Calu3 (cell line): ENCODE measurements at regions of chr2 and their contacts with region 1.

Region 1: DNA sequence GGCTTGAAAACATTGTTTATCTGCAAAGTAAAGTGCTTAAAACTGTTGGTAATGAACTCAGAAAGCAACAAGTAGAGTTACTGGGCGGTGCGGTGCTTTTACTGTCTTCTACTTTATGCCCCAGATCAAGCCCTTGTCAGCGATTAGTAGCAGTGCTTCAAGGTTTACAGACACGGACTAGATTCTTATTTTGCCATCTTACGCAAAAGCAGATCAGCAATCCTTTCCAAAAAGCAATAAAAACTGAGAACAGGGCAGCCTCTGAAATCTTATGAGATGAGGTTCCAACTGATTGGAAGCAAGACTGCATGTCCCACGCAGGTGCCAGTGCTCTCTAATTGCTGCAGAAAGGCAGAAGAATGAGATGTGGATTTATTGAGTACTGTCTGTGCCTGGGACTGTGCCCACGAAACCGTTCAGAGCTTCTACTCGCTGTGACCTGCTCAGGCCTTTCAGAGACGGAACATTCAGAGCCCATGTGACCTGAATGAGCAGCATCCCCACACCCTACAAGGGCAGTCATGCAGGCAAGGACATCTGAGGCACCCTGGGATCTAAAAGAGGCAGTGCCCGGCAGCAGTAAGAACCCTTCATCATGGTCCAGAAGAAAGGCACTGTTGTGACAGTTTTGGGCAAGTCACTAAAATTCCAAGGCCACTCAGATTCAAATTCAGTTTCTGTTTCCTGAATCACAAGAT is 15.7 kb downstream of the COL4A3 start:
- DNase-seq: peak; percentile 22
- H3K4me3 Mint-ChIP-seq: peak overlapping the region; percentile 41
- H3K27ac Mint-ChIP-seq: peak overlapping the region; percentile 82
- H3K4me1 Mint-ChIP-seq: peaks cover 62% of the 10 kb centered on the region
- H3K27me3 Mint-ChIP-seq: no peaks in the 10 kb centered on the region
- CTCF ChIP-seq: no peak

Region 2: DNA sequence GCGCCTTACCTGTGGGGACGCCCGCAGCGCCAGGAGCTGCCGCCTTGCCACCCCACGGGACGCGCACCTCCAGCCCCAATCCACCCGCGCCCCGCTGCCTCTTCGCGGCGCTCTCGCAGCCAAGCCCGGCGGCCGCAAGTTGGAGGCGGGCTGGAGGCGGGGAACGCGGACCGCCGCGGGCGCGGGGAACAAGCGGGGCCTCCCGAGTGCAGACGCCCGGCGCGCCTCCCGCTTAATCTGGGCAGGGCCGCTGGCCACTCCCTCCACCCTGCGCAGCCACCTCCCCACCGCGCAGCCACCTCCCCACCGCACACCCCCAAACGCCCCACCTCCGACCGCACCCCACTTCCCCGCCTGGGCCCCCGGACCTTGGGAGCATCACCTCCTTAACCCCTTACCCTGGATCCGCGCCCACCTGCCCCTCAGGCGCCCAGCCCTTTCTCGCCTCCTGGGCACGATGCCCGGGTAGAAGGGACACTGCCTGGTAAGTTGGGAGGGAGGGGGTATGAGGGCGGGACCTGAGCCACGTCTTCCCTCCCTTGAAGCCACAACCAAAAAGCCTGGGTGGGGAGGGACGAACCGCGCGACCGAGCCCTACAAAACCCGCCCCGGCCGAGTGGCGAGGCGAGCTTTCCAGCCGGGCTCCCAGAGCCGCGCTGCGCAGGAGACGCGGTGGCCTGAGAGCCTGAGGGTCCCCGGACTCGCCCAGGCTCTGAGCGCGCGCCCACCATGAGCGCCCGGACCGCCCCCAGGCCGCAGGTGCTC is 16.0 kb before region 1 on chr2 and contains the starts of genes COL4A3 and COL4A4:
- CTCF ChIA-PET with region 1: interaction called, 3 read pairs
- intact Hi-C with region 1: loop called (anchors 2 kb)
- DNase-seq: peak; percentile 82
- H3K4me3 Mint-ChIP-seq: peak within 1 kb of the TSS; percentile 90
- H3K27ac Mint-ChIP-seq: peak within 1 kb of the TSS; percentile 64
- H3K4me1 Mint-ChIP-seq: peaks cover 39% of the 10 kb centered on the region
- H3K27me3 Mint-ChIP-seq: no peaks in the 10 kb centered on the region
- CTCF ChIP-seq: no peak
- total RNA-seq, gene COL4A3: 17.6 and 20.2 TPM in 2 replicates
- total RNA-seq, gene COL4A4: 17.2 and 19.4 TPM in 2 replicates

Region 3: DNA sequence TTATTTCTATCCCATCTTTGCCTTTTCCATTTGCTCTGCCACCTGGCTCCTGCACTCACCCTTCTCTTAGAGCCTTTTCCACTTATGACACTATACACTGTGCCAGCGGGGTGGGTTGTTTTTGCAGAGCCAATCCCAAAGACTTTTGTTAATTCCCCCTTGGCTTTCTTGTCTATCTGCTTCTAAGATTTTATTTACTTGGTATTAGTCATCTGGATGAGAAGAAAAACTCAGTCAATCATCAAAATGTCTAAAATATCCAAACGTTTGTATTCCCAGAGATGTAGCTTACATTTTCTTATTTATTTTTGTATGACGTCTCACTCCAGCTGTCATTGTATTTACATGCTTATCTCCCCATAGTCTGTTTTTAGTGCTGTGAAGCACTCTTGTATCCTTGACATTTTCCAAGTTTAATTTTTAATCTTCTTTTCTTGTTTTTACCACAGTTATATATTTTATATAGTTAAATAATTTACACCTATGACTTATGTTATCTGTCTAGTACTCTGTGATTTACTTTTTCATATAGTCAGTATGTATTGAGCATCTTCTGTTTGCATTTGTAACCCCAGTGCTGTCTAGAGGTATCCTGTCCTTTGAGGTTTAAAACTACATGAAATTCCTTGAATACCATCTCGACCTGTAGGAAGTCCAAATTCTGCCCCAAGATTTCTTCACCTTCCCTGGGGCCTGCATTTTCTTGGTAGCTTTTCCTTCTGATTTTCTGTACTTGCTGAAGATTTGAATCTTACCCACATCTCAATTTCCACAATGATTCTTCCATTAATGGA is 39.4 kb after region 1 on chr2:
- CTCF ChIA-PET with region 1: no interaction called
- intact Hi-C with region 1: loop called (anchors 5 kb)
- DNase-seq: no peak
- H3K4me3 Mint-ChIP-seq: no peak overlapping the region
- H3K27ac Mint-ChIP-seq: no peak overlapping the region
- H3K4me1 Mint-ChIP-seq: peaks cover 19% of the 10 kb centered on the region
- H3K27me3 Mint-ChIP-seq: no peaks in the 10 kb centered on the region
- CTCF ChIP-seq: no peak